Sigmoid colon (tissue), 7 donors: ENCODE measurements at regions of chr10 and their contacts with region 1.

Region 1: DNA sequence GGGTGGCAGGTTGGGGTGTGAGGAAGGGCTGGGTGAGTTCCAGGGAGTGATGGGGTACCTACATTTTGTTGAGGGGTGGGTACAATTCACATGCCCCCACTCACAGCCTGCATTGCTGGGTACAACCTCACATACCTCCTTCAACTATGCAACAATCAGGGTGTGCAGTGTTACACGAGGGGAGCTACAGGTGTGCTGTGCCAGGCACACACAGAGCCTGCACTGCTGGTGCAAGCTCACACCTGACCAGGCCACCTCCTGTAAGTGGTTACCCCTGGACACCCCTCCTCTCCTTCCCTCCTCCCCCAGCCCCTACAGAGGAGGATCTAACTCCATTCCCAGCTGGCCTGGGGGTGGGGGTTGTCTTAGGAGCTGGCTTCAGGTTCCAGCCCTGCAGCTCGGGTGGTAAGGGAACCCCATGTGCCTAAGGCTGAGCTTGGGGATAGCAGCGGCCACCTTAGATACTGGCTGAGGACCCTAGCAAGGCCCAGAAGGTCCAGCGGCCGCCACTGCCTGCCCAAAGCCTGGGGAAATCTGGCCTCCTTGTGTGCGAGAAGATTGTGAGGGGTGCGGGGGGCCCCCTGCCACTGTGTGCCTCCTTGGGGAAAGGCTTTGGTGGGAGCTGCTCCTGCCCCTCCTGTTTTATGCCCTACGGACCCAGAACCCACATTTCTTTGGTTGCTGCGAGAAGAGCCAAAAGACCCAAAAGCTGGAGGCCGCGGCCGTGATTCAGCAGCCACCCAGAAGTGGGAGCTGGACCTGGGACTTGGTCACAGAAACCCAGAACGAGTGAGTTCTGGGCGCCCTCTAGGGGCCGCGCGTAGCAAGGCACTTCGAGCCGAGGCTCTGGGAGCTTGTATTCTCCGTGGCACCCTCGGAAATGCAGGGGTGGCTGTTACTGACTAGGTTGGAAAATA is 10.8 kb downstream of the TLX1 start:
- DNase-seq: peak; percentile 85
- H3K4me3 ChIP-seq: no peak overlapping the region
- H3K27ac ChIP-seq: no peak overlapping the region
- H3K4me1 ChIP-seq: peaks cover 0 to 30% (median 18%) of the 10 kb centered on the region in 4 donors
- H3K27me3 ChIP-seq: peaks cover 62 to 100% (median 95%) of the 10 kb centered on the region in 3 donors
- CTCF ChIP-seq: peak; percentile 47 to 96 (median 89)
- EP300 ChIP-seq: no peak
- POLR2A ChIP-seq: no peak

Region 2: GRCh38 chr10:101047961-101048892 is 93.6 kb before region 1 on chr10:
- intact Hi-C with region 1: loop called (anchors 5 kb)
- DNase-seq: no peak
- H3K4me3 ChIP-seq: no peak overlapping the region
- H3K27ac ChIP-seq: no peak overlapping the region
- H3K4me1 ChIP-seq: peaks cover 0 to 14% (median 10%) of the 10 kb centered on the region in 4 donors
- H3K27me3 ChIP-seq: peaks cover 36 to 69% (median 60%) of the 10 kb centered on the region in 3 donors
- CTCF ChIP-seq: no peak
- EP300 ChIP-seq: no peak
- POLR2A ChIP-seq: no peak

Region 3: DNA sequence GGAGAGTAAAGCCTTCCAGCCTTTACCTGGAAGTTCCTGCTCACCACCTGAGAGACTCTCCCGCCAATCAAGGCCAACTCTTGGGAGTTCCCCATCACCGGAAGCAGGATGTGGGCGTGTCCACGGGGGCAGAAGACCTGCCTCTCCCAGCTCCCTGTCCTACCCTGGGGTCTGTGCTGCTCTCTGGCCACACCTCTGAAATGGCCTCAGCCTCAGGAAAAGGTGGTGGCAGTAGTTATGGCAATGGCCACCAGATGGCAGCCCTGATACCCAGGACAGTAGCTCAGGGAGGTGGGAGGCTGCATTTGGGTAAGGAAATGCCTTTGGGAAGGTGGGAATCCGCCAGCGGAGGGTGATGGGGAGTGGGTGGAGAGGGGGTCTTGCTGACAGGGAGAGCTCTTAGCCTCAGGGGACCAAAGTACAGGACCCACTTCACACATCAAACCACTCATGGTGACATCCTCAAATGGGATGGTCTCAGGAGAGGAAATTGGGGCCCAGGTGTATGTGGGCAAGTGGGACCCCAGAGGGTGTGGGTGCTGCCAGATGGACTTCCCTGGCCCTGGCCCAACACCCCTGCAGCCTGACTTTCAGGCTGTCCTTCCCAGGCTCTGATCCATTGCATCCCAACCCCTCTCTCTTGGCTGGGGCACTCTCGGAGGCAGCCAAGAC is 46.2 kb before region 1 on chr10:
- intact Hi-C with region 1: loop called (anchors 1 kb)
- DNase-seq: no peak
- H3K4me3 ChIP-seq: no peak overlapping the region
- H3K27ac ChIP-seq: no peak overlapping the region
- H3K4me1 ChIP-seq: no peaks in the 10 kb centered on the region
- H3K27me3 ChIP-seq: peaks cover 3 to 91% (median 53%) of the 10 kb centered on the region in 3 donors
- CTCF ChIP-seq: peak; percentile 44 to 80 (median 76)
- EP300 ChIP-seq: no peak
- POLR2A ChIP-seq: no peak